Activated CD4-positive, alpha-beta T cell treated with anti-CD3 and anti-CD28 coated beads, Interleukin-2, amount 10 ng/mL, durations not matched to agents 24 days and 14 days (primary cell): ENCODE measurements at regions of chr7 and their contacts with region 1.

Region 1: DNA sequence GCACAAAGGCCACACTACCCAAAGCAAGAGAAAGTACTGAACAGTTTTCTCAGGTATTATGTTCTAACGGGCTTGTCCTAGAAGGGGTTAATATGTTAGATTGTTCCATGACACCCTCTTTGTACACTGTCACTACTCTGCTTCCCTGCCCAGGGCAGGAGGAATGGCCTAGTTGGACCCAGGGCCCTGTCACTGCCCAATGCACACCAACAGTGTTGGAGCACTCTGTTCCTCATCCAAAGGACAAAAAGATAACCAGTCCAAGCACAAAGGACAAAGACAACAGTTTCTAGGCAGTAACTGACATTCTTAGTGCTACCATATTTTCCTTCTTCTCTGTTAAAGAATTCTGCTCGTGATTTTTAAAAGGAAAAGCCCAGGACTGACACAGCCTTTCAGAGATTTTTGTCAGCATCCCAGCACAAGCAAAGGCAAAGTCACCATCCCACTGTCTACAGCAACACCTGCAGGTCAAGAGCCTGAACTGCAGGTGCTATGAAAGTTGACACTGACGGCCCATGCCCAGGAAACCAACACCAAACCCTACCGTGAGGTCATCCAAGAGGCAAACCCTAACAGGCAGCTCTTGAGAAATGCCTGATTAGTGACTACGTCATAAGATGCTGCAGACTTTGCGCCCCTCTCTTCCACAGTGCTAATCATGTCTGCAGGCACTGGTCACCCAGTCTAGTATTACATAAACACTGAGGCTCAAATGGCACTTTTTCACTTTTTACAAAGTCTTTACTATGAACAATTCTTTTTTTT is 13.2 kb downstream of the NUDCD3 start:
- DNase-seq: peak; percentile 89
- H3K4me3 Mint-ChIP-seq: no peak overlapping the region
- H3K27ac Mint-ChIP-seq: no peak overlapping the region
- H3K4me1 Mint-ChIP-seq: peaks cover 15% of the 10 kb centered on the region
- H3K27me3 Mint-ChIP-seq: no peaks in the 10 kb centered on the region

Region 2: GRCh38 chr7:44163591-44163990 is 313.7 kb before region 1 on chr7:
- intact Hi-C with region 1: no loop called
- DNase-seq: no peak
- H3K4me3 Mint-ChIP-seq: no peak overlapping the region
- H3K27ac Mint-ChIP-seq: no peak overlapping the region
- H3K4me1 Mint-ChIP-seq: peaks cover 2% of the 10 kb centered on the region
- H3K27me3 Mint-ChIP-seq: peaks cover 18% of the 10 kb centered on the region

Region 3: GRCh38 chr7:44257618-44258422 is 219.4 kb before region 1 on chr7:
- intact Hi-C with region 1: loop called (anchors 5 kb)
- DNase-seq: peak; percentile 90
- H3K4me3 Mint-ChIP-seq: peak overlapping the region; percentile 54
- H3K27ac Mint-ChIP-seq: peak overlapping the region; percentile 95
- H3K4me1 Mint-ChIP-seq: peaks cover 37% of the 10 kb centered on the region
- H3K27me3 Mint-ChIP-seq: no peaks in the 10 kb centered on the region

Region 4: DNA sequence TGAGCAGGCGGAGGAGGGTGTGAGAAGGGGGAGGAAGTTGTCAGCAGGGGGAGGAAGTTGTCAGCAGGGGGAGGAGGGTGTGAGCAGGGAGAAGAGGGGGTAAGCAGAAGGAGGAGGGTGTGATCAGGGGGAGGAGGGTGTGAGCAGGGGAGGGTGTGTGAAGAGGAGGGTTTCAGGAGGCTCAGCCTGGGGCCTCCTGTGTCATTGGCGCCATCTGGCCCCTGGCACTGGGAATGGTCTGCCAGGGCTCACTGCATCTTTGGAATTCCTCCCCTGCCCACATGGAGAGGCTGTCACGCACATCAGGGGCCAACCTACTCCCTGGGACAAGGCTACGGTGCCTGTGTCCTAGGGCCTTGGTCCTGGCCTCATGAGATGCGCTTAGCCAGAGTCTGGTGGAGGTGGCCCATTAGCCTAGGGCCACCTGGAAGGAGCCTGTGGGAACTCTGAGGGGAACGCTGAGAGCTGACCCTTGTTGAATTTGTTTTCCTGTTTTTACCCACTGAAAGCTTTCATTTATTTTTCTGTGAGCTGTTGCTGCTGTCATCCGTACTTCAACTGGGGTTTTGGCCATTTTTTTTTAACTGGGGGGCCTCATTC is 169.8 kb before region 1 on chr7:
- intact Hi-C with region 1: loop called (anchors 2 kb)
- DNase-seq: no peak
- H3K4me3 Mint-ChIP-seq: no peak overlapping the region
- H3K27ac Mint-ChIP-seq: no peak overlapping the region
- H3K4me1 Mint-ChIP-seq: peaks cover 5% of the 10 kb centered on the region
- H3K27me3 Mint-ChIP-seq: peaks cover 27% of the 10 kb centered on the region

Region 5: DNA sequence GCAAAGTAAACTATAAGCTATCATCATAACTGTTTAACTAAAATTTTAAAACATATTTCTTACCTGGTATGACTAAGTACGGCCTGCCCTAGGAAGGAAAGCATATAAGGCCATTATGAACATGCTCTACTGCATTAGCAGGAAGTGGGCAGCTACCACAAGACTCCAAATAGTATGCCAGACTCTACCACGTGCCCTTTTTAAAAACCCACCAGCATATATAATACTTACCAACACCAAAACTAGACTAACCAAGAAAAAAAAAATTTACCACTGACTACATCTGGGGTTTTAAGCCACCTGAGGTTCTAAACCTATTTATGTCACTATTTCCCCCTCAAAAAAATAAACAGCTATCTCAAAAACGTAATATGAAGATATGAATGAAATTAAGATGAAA is 16.9 kb before region 1 on chr7:
- intact Hi-C with region 1: loop called (anchors 2 kb)
- DNase-seq: peak; percentile 88
- H3K4me3 Mint-ChIP-seq: peak overlapping the region; percentile 72
- H3K27ac Mint-ChIP-seq: peak overlapping the region; percentile 88
- H3K4me1 Mint-ChIP-seq: peaks cover 58% of the 10 kb centered on the region
- H3K27me3 Mint-ChIP-seq: no peaks in the 10 kb centered on the region